Vagina (tissue), 2 donors: ENCODE measurements at regions of chr13 and their contacts with region 1.

Region 1: GRCh38 chr13:97109841-97110492 is 112.2 kb upstream of the MBNL2 start:
- DNase-seq: no peak
- H3K4me3 ChIP-seq: no peak overlapping the region
- H3K27ac ChIP-seq: peak overlapping the region; percentile 9
- H3K4me1 ChIP-seq: peaks cover 9% of the 10 kb centered on the region
- H3K27me3 ChIP-seq: no peaks in the 10 kb centered on the region
- CTCF ChIP-seq: peak; percentile 91 to 97 (median 96)
- POLR2A ChIP-seq: no peak

Region 2: DNA sequence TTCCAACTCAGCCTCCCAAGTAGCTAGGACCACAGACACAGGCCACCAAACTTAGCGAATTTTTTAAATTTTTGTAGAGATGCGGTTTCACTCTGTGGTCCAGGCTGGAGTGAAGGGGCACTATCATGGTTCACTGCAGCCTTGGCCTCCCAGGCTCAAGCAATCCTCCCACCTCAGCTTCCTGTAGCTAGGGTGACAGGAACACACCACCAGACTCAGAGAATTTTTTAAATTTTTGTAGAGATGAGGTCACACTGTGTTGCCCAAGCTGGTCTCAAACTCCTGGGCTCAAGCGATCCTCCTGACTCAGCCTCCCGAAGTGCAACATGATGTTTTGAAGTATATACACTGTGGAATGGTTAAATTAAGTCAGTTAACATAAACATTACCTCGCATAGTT is 379.3 kb before region 1 on chr13:
- intact Hi-C with region 1: no loop called
- DNase-seq: no peak
- H3K4me3 ChIP-seq: no peak overlapping the region
- H3K27ac ChIP-seq: no peak overlapping the region
- H3K4me1 ChIP-seq: no peaks in the 10 kb centered on the region
- H3K27me3 ChIP-seq: no peaks in the 10 kb centered on the region
- CTCF ChIP-seq: no peak
- POLR2A ChIP-seq: no peak

Region 3: GRCh38 chr13:97359181-97360057 is 249.5 kb after region 1 on chr13:
- intact Hi-C with region 1: loop called (anchors 5 kb)
- DNase-seq: no peak
- H3K4me3 ChIP-seq: no peak overlapping the region
- H3K27ac ChIP-seq: peak overlapping the region; percentile 56
- H3K4me1 ChIP-seq: peaks cover 7% of the 10 kb centered on the region
- H3K27me3 ChIP-seq: no peaks in the 10 kb centered on the region
- CTCF ChIP-seq: peak; percentile 72 to 92 (median 76)
- POLR2A ChIP-seq: no peak

Region 4: GRCh38 chr13:97432917-97433726 is 323.2 kb after region 1 on chr13:
- intact Hi-C with region 1: loop called (anchors 10 kb)
- DNase-seq: peak; percentile 100
- H3K4me3 ChIP-seq: peak overlapping the region; percentile 88 to 90
- H3K27ac ChIP-seq: peak overlapping the region; percentile 100
- H3K4me1 ChIP-seq: peaks cover 41% of the 10 kb centered on the region
- H3K27me3 ChIP-seq: no peaks in the 10 kb centered on the region
- CTCF ChIP-seq: no peak
- POLR2A ChIP-seq: peak in 1 of 2 donors; percentile 68